ENCODE measurements at regions of chr18 and their contacts with region 1.

Region 1: DNA sequence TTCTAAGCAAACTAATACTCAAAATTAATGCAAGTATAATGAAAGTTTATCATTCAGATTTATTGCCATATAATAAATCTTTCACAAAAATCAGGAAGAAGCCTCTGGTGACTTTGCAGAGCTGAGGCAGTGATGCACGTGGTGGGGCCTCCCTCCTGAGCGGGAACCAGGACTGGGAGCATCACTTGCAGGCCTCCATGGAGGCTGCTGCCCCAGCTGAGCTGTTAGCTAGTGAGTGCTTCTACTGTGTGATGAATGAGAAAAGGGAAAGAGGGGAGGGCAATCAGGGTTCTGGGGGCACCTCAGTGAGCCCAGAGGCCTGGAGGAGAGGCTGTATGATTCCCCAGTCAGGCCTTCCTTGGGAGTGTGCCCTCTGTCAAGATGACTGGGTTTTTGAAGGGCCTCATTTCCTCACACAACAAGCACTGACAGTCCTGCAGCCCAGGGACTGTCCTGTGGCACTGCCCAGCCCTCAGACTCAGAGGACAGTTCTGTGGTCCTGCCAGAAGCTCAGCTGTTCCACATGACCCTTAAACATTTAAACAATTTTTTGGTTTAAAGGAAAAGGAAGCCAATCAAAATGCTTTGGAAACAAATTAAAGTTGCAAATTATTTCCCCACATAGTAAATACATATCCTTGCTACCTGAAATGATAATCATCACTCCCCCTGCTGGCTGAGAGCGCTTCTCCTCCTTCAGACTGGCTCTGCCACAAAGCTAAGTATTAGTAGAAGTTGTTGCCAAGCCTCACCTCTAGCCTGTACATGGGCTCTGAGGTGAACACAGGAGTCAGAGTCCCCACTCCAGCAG is 90.9 kb upstream of the SMAD7 start:
- DNase-seq: no peak
- H3K4me3 ChIP-seq: no peak overlapping the region
- H3K27me3 ChIP-seq: no peaks in the 10 kb centered on the region
- CTCF ChIP-seq: peak; percentile 72

Region 2: GRCh38 chr18:48997985-48998831 is 43.4 kb before region 1 on chr18:
- CTCF ChIA-PET with region 1: interaction called, 10 read pairs
- POLR2A ChIA-PET with region 1: no interaction called
- DNase-seq: peak; percentile 96
- H3K4me3 ChIP-seq: no peak overlapping the region
- H3K27me3 ChIP-seq: no peaks in the 10 kb centered on the region
- CTCF ChIP-seq: no peak

Region 3: DNA sequence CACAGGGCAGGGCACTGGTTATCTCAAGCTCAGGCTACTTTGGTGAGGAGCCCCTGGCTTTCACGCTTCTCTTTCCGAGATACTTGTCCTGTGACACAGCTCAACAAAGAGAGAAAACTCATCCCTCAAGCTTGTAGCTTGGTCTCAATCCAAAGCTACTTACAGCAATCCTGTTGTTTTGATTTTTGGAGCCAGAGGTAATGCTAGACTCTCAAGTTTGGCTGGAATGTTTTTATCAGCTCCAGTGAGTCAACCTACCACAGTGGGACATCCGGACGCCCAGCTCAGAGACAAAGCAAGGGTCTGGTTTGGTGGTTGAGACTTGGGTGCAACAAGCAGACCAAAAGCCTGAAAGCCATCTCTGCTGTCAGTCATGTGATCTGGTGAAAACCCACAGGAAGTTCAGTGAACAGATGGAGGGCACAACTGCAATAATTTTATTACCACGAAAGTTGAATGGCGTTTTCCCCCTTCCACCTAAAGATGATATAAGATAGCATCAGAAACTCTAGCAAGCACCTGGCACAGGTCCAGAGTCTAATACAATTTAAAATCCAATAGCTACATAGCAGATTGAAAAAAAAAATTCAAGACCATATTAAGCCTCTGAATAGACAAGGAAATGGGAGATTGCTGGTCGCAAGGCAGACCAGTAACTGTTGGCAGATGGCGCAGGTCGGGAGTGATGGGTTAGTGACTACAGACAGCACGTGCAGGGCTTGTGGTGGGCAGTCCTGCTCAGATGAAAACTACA is 11.4 kb after region 1 on chr18:
- CTCF ChIA-PET with region 1: interaction called, 13 read pairs
- POLR2A ChIA-PET with region 1: interaction called, 5 read pairs
- DNase-seq: peak; percentile 90
- H3K4me3 ChIP-seq: no peak overlapping the region
- H3K27me3 ChIP-seq: no peaks in the 10 kb centered on the region
- CTCF ChIP-seq: no peak